Activated CD4-positive, alpha-beta memory T cell treated with anti-CD3 and anti-CD28 coated beads for 36 hours (primary cell): ENCODE measurements at regions of chr10 and their contacts with region 1.

Region 1: GRCh38 chr10:97334370-97335175 is at the start of gene FRAT2:
- DNase-seq: peak; percentile 90
- H3K4me3 Mint-ChIP-seq: peak within 1 kb of the TSS; percentile 77
- H3K27ac Mint-ChIP-seq: peak within 1 kb of the TSS; percentile 80
- H3K4me1 Mint-ChIP-seq: peaks cover 38% of the 10 kb centered on the region
- H3K27me3 Mint-ChIP-seq: peaks cover 1% of the 10 kb centered on the region
- total RNA-seq, gene FRAT2: 5.1 to 5.3 TPM

Region 2: DNA sequence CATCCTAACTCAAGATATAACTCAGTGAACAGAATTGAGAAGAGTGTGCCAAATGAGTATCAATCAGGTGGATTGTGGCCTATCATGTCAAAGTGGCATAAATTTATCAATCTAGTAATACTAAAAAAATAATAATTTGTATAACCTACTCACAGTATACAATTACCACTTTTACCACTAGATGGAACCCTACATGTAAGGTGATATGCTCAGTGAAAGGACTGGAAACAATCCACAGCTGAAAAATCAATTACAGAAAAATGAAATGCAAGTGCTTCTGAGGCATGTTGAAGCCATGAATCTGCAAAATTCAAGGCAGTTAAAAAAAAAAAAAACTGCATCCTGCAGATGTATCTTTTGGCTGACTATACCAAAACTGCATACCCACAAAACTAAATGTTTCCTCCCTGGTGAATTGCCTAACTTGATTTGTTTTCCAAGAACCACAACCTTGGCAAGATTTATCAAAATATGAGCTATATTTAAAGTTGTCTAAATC is 56.0 kb before region 1 on chr10:
- CTCF ChIA-PET with region 1: interaction called, 26 read pairs
- POLR2A ChIA-PET with region 1: interaction called, 5 read pairs
- intact Hi-C with region 1: no loop called
- DNase-seq: no peak
- H3K4me3 Mint-ChIP-seq: no peak overlapping the region
- H3K27ac Mint-ChIP-seq: no peak overlapping the region
- H3K4me1 Mint-ChIP-seq: peaks cover 26% of the 10 kb centered on the region
- H3K27me3 Mint-ChIP-seq: no peaks in the 10 kb centered on the region

Region 3: GRCh38 chr10:97318772-97319651 is 15.6 kb before region 1 on chr10 and contains the start of gene FRAT1:
- CTCF ChIA-PET with region 1: interaction called, 21 read pairs
- POLR2A ChIA-PET with region 1: interaction called, 29 read pairs
- intact Hi-C with region 1: loop called (anchors 1 kb)
- DNase-seq: peak; percentile 90
- H3K4me3 Mint-ChIP-seq: peak within 1 kb of the TSS; percentile 83
- H3K27ac Mint-ChIP-seq: peak within 1 kb of the TSS; percentile 97
- H3K4me1 Mint-ChIP-seq: peaks cover 24% of the 10 kb centered on the region
- H3K27me3 Mint-ChIP-seq: peaks cover 6% of the 10 kb centered on the region
- total RNA-seq, gene FRAT1: 2.1 TPM

Region 4: DNA sequence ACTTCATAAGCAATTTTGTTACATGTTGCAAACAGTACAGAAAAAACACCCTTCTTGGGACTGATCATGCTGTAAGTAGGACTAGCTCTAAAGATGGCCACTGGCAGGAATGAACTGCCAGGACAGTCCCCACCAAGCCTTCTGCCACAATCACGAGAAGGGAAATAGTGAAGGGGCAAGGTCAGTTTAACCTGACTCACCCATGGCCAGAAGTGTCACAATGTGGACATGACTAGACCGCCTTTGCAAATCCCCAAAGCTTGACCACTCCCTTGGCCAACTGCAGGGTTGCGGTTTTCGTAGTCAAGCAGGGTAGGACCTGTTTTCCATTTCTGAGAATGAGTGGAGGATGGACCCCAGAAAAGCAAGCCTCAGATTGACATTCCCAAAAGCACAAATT is 19.4 kb after region 1 on chr10:
- CTCF ChIA-PET with region 1: no interaction called
- POLR2A ChIA-PET with region 1: no interaction called
- intact Hi-C with region 1: no loop called
- DNase-seq: no peak
- H3K4me3 Mint-ChIP-seq: no peak overlapping the region
- H3K27ac Mint-ChIP-seq: no peak overlapping the region
- H3K4me1 Mint-ChIP-seq: no peaks in the 10 kb centered on the region
- H3K27me3 Mint-ChIP-seq: no peaks in the 10 kb centered on the region

Region 5: DNA sequence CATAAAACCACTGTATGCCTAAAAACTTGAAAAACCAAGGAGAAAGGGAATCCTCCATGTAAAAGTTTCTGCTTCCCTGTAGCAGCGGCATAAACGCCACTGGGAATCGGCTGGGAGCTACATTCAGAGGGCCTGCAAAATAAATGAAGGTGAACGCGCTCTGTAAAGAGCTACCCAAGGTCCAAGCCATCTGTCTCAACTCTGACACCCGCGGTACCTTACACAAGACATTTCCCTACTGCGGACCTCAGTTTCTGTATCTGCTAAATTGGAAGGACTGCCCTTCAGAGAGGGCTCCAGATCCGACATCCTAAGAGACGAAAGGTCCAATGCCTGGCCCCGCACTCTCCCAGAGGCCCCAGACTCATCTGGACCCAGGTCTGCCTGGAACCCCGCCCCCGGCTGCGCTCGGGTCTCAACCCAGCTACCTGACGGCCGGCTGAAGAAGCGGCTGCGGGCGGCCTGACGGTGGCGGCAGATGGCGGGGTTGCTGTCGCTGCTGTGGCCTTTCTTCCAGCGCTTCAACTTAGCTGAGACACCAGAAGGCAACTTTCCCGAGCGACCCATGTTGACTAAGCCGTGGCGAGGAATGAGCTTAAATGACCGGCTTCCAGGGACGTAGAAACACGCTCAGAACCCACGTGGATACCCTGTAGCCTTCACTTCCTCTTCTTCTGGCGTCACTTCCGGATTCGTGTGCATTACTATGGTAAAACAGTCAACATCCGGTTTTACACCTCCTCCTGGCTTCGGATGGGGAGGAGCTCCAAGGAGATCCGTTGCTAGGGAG is 66.3 kb after region 1 on chr10 and contains the start of gene RRP12:
- CTCF ChIA-PET with region 1: interaction called, 4 read pairs
- POLR2A ChIA-PET with region 1: interaction called, 9 read pairs
- intact Hi-C with region 1: loop called (anchors 5 kb)
- DNase-seq: peak; percentile 88
- H3K4me3 Mint-ChIP-seq: peak within 1 kb of the TSS; percentile 93
- H3K27ac Mint-ChIP-seq: peak within 1 kb of the TSS; percentile 88
- H3K4me1 Mint-ChIP-seq: peaks cover 10% of the 10 kb centered on the region
- H3K27me3 Mint-ChIP-seq: no peaks in the 10 kb centered on the region
- total RNA-seq, gene RRP12: 40.4 to 41.8 TPM

Region 6: DNA sequence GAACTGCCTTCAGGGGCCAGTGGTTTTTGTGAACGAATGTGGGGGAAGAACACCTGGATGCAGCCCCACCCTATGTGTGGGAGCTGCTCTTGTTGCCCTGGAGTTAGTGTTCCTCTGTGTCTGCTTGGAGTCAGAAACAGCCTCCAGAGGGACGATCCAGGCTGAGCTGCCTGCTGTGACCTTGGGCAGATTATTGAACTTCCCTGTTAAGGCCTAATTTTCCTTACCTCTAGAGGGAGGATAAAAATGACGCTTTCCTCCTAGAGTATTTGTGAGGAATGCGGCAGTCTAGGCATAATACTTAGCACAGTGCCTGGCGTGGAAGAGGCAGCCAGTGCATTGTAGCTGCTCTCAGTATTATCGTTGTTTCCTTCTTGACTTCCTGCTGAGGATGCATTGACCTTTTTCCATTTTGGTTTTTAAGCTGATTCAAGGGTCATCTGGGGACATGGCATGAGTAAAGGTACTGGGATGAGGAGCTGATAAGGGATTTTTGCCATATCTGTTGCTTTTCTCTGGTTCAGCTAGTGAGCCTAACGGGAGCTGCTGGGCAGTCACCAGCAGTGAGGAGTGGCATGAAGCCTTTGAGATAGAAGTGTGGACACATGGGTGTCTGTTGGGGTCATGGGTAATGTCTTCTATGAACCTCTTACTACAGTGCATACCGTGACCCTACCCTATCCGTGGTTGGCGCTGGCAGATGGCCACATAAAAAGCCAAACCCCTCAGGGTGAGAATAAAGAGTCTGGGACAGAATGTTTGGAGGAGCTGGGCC is 408.8 kb after region 1 on chr10:
- CTCF ChIA-PET with region 1: no interaction called
- POLR2A ChIA-PET with region 1: no interaction called
- intact Hi-C with region 1: no loop called
- DNase-seq: no peak
- H3K4me3 Mint-ChIP-seq: no peak overlapping the region
- H3K27ac Mint-ChIP-seq: no peak overlapping the region
- H3K4me1 Mint-ChIP-seq: peaks cover 31% of the 10 kb centered on the region
- H3K27me3 Mint-ChIP-seq: no peaks in the 10 kb centered on the region